ENCODE measurements at regions of chr2 and their contacts with region 1.

Region 1: GRCh38 chr2:184326066-184326465 is 272.3 kb upstream of the ZNF804A start:
- DNase-seq: no peak
- H3K4me3 ChIP-seq: no peak overlapping the region
- CTCF ChIP-seq: no peak
- POLR2A ChIP-seq: no peak

Region 2: GRCh38 chr2:184637781-184638180 is 311.7 kb after region 1 on chr2:
- intact Hi-C with region 1: loop called (anchors 5 kb)
- DNase-seq: no peak
- H3K4me3 ChIP-seq: no peak overlapping the region
- CTCF ChIP-seq: no peak
- POLR2A ChIP-seq: no peak

Measured in lower leg skin (tissue), 4 donors.